ENCODE measurements at regions of chr9 and their contacts with region 1.

Region 1: GRCh38 chr9:72952914-72953313 is at the start of gene ALDH1A1:
- DNase-seq: no peak
- ATAC-seq: peak in 7 of 8 donors; percentile 45 to 69 (median 59)
- H3K4me3 ChIP-seq: peak within 1 kb of the TSS in 9 of 10 donors; percentile 4 to 52 (median 44)
- H3K27ac ChIP-seq: peak within 1 kb of the TSS in 9 of 10 donors; percentile 2 to 69 (median 50)
- H3K4me1 ChIP-seq: peaks cover 0 to 53% (median 10%) of the 10 kb centered on the region in 9 donors
- H3K27me3 ChIP-seq: no peaks in the 10 kb centered on the region
- CTCF ChIP-seq: no peak
- total RNA-seq, gene ALDH1A1: 5.6 to 21.7 (median 11.1) TPM

Region 2: GRCh38 chr9:72635197-72635596 is 317.7 kb before region 1 on chr9:
- intact Hi-C with region 1: no loop called
- DNase-seq: no peak
- ATAC-seq: no peak
- H3K4me3 ChIP-seq: no peak overlapping the region
- H3K27ac ChIP-seq: no peak overlapping the region
- H3K4me1 ChIP-seq: peaks cover 0 to 11% (median 0%) of the 10 kb centered on the region in 9 donors
- H3K27me3 ChIP-seq: no peaks in the 10 kb centered on the region
- CTCF ChIP-seq: no peak

Region 3: DNA sequence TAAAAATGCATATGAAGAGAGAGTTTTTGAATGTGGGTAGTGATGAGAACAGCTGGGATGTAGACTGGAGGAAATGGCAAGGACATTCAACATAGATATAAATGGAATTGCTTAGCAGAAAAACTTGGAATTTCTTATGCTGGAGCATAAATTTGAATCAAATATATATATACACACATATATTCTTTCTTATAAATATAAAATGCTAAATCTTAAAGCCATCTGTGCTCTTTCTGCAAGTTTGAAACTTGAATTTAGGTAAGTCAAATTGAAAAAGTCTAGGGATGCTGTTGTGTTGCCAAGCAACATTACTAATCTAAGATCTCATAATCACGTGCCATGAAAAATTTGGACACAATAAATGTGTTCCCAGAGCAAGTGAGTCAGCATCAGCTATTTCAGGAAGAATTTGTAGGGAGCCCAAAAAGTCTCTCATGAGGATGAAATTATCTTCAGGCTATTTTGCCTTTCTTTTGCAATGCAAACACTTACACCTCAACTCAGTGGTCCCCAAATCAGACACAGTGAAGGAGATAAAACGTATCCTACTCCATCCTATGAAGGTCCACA is 58.4 kb after region 1 on chr9:
- intact Hi-C with region 1: loop called in 1 of 10 experiments (anchors 10 kb)
- DNase-seq: no peak
- ATAC-seq: peak in 2 of 8 donors; percentile 44 to 52
- H3K4me3 ChIP-seq: no peak overlapping the region
- H3K27ac ChIP-seq: no peak overlapping the region
- H3K4me1 ChIP-seq: peaks cover 0 to 10% (median 0%) of the 10 kb centered on the region in 9 donors
- H3K27me3 ChIP-seq: no peaks in the 10 kb centered on the region
- CTCF ChIP-seq: no peak

Measured in heart right ventricle (tissue), 16 donors.